SK-N-SH (cell line): ENCODE measurements at regions of chr7 and their contacts with region 1.

Region 1: DNA sequence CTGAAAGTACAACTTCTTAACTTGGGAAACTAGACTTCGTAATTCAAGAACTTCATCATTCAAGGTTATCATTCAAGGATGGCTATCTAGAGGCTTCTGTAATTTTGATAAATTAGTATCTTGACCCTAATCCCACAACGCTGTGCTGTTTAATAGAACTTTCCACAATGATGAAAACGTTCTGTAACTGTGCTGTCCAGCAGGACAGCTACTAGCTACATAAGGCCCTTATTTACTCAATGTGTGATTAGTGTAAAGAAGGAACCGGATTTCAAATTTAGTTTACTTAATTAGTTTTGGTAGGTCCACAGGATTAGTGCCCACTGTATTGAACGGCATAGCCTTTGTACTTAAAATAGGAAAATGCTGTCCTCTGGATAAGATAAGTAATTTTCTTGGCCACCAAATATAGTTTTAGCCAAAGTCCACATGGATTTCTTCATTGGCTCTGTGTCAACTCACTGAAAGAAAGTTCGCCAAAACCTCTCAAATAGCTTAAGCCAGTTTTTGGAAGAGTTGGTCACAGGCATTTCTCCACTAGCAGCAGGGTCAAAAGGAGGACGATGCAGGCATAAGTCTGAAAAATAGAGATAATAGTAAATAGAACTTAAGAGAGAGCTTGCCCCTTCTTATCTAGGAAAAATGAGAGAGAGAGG is 17.3 kb downstream of the DGKI start:
- DNase-seq: no peak
- H3K4me3 ChIP-seq: no peak overlapping the region
- H3K27ac ChIP-seq: no peak overlapping the region
- H3K4me1 ChIP-seq: no peaks in the 10 kb centered on the region
- H3K27me3 ChIP-seq: no peaks in the 10 kb centered on the region
- CTCF ChIP-seq: no peak
- EP300 ChIP-seq: no peak
- RAD21 ChIP-seq: no peak

Region 2: GRCh38 chr7:137839903-137840779 is 10.7 kb after region 1 on chr7:
- CTCF ChIA-PET with region 1: interaction called, 11 read pairs
- POLR2A ChIA-PET with region 1: no interaction called
- DNase-seq: no peak
- H3K4me3 ChIP-seq: no peak overlapping the region
- H3K27ac ChIP-seq: no peak overlapping the region
- H3K4me1 ChIP-seq: peaks cover 6 to 25% of the 10 kb centered on the region in 2 experiments; a peak in 3 of 4 replicates
- H3K27me3 ChIP-seq: no peaks in the 10 kb centered on the region
- CTCF ChIP-seq: no peak
- EP300 ChIP-seq: no peak
- RAD21 ChIP-seq: no peak

Region 3: GRCh38 chr7:137915266-137915665 is 85.8 kb after region 1 on chr7:
- CTCF ChIA-PET with region 1: no interaction called
- POLR2A ChIA-PET with region 1: no interaction called
- DNase-seq: no peak
- H3K4me3 ChIP-seq: no peak overlapping the region
- H3K27ac ChIP-seq: no peak overlapping the region
- H3K4me1 ChIP-seq: peaks cover 0 to 9% of the 10 kb centered on the region in 2 experiments; a peak in 1 of 4 replicates
- H3K27me3 ChIP-seq: no peaks in the 10 kb centered on the region
- CTCF ChIP-seq: no peak
- EP300 ChIP-seq: no peak
- RAD21 ChIP-seq: no peak